Activated CD4-positive, alpha-beta memory T cell treated with anti-CD3 and anti-CD28 coated beads for 36 hours (primary cell): ENCODE measurements at regions of chr16 and their contacts with region 1.

Region 1: DNA sequence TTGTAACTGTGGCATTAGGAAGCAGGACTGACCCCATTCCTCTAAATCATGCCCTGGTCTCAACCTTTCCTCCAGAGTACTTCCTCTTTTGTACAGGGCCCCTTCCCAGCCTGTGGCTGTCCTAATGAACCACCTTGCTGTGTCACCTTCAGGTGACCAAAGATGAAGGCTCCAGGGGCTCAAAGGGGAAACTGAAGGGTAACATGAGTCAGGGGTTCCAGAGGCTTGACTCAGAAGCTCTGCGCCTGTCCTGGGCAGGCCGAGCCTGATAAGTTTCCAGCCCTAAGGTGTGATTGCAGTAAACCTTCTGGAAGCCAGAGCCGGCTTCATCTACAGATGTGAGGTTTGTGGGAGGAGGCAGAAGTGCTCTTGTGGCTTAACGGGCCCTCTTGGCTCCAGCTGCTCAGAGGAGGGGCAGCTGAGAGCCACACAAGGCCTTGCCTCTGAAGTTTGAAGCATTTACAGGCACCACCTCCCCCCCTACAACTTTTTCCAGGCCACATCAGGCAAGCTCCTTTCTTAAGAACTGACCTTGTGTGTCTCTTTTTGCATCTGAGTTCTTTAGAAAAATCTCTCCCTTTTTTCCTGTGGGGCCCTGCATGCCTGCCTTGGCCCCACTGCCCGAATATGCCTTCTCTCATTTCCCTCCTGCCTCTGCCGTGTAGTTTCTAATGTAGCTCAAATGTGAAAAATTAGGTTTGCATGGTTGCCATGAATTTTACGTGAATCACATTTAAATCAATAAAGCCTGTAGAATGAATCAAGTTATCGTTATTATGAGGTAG is 149.9 kb downstream of the CLEC16A start:
- DNase-seq: peak; percentile 87
- H3K4me3 Mint-ChIP-seq: peak overlapping the region; percentile 49
- H3K27ac Mint-ChIP-seq: peak overlapping the region; percentile 98
- H3K4me1 Mint-ChIP-seq: peaks cover 82% of the 10 kb centered on the region
- H3K27me3 Mint-ChIP-seq: no peaks in the 10 kb centered on the region

Region 2: GRCh38 chr16:10981697-10982216 is 112.5 kb before region 1 on chr16:
- CTCF ChIA-PET with region 1: interaction called, 10 read pairs
- POLR2A ChIA-PET with region 1: interaction called, 4 read pairs
- intact Hi-C with region 1: no loop called
- DNase-seq: peak; percentile 79
- H3K4me3 Mint-ChIP-seq: peak overlapping the region; percentile 71
- H3K27ac Mint-ChIP-seq: peak overlapping the region; percentile 87
- H3K4me1 Mint-ChIP-seq: peaks cover 48% of the 10 kb centered on the region
- H3K27me3 Mint-ChIP-seq: no peaks in the 10 kb centered on the region

Region 3: GRCh38 chr16:11076259-11077018 is 17.8 kb before region 1 on chr16:
- CTCF ChIA-PET with region 1: interaction called, 4 read pairs
- POLR2A ChIA-PET with region 1: interaction called, 14 read pairs
- intact Hi-C with region 1: loop called (anchors 1 kb)
- DNase-seq: peak; percentile 88
- H3K4me3 Mint-ChIP-seq: no peak overlapping the region
- H3K27ac Mint-ChIP-seq: peak overlapping the region; percentile 94
- H3K4me1 Mint-ChIP-seq: peaks cover 96% of the 10 kb centered on the region
- H3K27me3 Mint-ChIP-seq: no peaks in the 10 kb centered on the region

Region 4: DNA sequence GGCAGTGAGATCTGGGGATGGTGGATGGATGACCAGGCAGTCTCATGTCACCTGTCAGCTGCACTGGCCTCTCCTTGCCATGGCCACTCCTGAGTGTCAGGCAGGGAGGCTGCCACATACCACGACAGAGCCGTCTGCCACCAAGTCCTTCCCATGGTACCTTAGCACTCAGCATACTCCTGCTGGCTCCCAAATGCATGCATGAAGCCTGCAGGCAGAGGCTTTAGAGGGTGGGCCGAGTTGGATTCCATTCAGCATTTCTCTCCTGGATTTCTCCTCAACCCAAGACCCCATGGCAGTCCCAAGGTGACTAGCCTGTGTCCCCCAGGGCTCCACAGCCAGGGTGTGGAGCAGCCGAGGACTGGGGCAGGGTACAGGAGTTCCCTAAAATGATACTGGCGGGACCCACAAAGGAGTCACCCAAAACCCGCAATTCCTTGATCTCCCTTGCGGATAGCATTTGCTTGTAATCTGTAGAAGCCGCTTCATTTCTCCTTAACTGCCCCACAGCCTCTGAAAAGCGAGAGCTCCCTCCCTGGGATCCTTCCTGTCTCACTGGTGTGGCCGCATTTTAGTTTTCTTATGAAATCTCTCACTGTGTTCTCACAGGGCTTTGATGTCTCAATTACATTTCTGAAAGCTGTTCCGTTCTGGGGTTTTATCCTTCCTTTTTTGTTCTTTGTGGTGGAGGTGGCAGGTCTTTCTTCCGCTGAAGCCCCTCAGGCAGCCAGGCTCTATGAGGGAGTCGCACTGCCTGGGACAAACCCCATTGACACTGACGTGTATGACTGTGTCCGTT is 20.3 kb after region 1 on chr16:
- CTCF ChIA-PET with region 1: interaction called, 5 read pairs
- POLR2A ChIA-PET with region 1: interaction called, 9 read pairs
- intact Hi-C with region 1: loop called (anchors 1 kb)
- DNase-seq: peak; percentile 71
- H3K4me3 Mint-ChIP-seq: peak overlapping the region; percentile 60
- H3K27ac Mint-ChIP-seq: peak overlapping the region; percentile 88
- H3K4me1 Mint-ChIP-seq: peaks cover 73% of the 10 kb centered on the region
- H3K27me3 Mint-ChIP-seq: no peaks in the 10 kb centered on the region